Psoas muscle (tissue), 8 donors: ENCODE measurements at regions of chr15 and their contacts with region 1.

Region 1: GRCh38 chr15:43185157-43186017 is at the start of gene CCNDBP1:
- DNase-seq: peak; percentile 96 to 98
- ATAC-seq: peak; percentile 96 to 98 (median 97)
- H3K4me3 ChIP-seq: peak within 1 kb of the TSS; percentile 88
- H3K27ac ChIP-seq: peak within 1 kb of the TSS; percentile 88
- H3K4me1 ChIP-seq: peaks cover 42% of the 10 kb centered on the region
- H3K27me3 ChIP-seq: no peaks in the 10 kb centered on the region
- CTCF ChIP-seq: peak; percentile 24
- total RNA-seq, gene CCNDBP1: 40.7 to 64.3 (median 50.4) TPM

Region 2: GRCh38 chr15:43105778-43106485 is 79.5 kb before region 1 on chr15 and contains the start of gene UBR1:
- intact Hi-C with region 1: loop called in 1 of 2 experiments (anchors 5 kb)
- DNase-seq: peak; percentile 92 to 95
- ATAC-seq: peak; percentile 91 to 94 (median 92)
- H3K4me3 ChIP-seq: peak within 1 kb of the TSS; percentile 93
- H3K27ac ChIP-seq: peak within 1 kb of the TSS; percentile 94
- H3K4me1 ChIP-seq: peaks cover 37% of the 10 kb centered on the region
- H3K27me3 ChIP-seq: no peaks in the 10 kb centered on the region
- CTCF ChIP-seq: no peak
- total RNA-seq, gene UBR1: 20.4 to 25.1 (median 22.9) TPM

Region 3: GRCh38 chr15:43204016-43204901 is 18.9 kb after region 1 on chr15:
- intact Hi-C with region 1: loop called in 1 of 2 experiments (anchors 1 kb)
- DNase-seq: peak; percentile 44 to 75
- ATAC-seq: peak; percentile 74 to 92 (median 80)
- H3K4me3 ChIP-seq: no peak overlapping the region
- H3K27ac ChIP-seq: no peak overlapping the region
- H3K4me1 ChIP-seq: no peaks in the 10 kb centered on the region
- H3K27me3 ChIP-seq: peaks cover 0 to 2% (median 0%) of the 10 kb centered on the region in 3 donors
- CTCF ChIP-seq: peak; percentile 59

Region 4: GRCh38 chr15:43285609-43286037 is 100.2 kb after region 1 on chr15:
- intact Hi-C with region 1: loop called in 1 of 2 experiments (anchors 5 kb)
- DNase-seq: no peak
- ATAC-seq: peak; percentile 79 to 91 (median 86)
- H3K4me3 ChIP-seq: no peak overlapping the region
- H3K27ac ChIP-seq: no peak overlapping the region
- H3K4me1 ChIP-seq: peaks cover 3% of the 10 kb centered on the region
- H3K27me3 ChIP-seq: no peaks in the 10 kb centered on the region
- CTCF ChIP-seq: peak; percentile 82